HCT116 (cell line): ENCODE measurements at regions of chr2 and their contacts with region 1.

Region 1: DNA sequence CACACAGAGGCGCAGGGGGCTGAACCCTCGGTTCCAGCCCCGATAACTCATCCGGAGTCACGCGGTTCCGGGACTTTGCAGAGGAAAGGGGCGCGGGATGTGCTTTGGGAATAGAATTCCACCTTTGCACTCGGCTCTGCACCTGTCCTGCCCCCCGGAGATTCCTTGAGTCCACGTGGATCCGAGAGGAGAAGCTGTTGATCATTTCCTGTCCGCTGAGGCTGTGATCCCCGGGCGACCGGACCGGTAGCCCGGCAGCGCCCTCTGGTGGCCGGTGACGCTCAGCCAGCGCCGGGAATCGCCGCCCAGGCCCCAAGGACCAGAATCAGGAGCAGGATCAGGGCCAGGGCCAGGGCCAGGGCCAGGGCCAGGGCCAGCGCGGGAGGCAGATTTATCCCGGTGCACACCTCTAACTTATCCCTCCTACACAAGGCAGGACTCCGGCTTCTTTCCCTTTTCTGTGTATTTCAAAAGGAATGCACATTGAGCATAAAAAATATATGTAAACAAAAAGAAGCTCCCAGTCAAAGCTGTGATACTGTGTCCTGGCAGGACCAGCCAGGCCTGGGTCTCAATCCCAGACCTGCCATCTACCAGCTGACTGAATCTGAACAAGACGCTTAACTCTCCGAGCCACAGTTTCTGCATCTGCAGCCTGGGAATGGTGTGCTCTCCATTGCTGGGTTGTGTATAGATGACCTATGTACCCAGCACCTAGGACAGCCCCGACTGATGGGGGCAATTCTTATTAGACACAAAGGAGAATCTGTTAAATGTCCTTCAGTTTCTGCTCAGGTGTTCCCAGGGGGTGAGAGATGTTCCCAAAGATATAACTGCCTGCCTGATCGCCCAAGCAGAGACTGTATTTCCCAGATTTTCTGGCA is 8.5 kb upstream of the SPATA3 start:
- DNase-seq: peak; percentile 51
- ATAC-seq: peak; percentile 93
- H3K4me3 ChIP-seq: peak overlapping the region; percentile 24 to 47
- H3K27ac ChIP-seq: no peak overlapping the region
- H3K4me1 ChIP-seq: peaks cover 4 to 6% of the 10 kb centered on the region in 2 experiments; a peak in 3 of 4 replicates
- H3K27me3 ChIP-seq: no peaks in the 10 kb centered on the region
- CTCF ChIP-seq: peak; percentile 92 to 95 (median 94)
- POLR2A ChIP-seq: no peak
- RAD21 ChIP-seq: peak; percentile 94

Region 2: GRCh38 chr2:230824406-230824978 is 162.9 kb before region 1 on chr2:
- CTCF ChIA-PET with region 1: interaction called, 36 read pairs
- POLR2A ChIA-PET with region 1: no interaction called
- RAD21 ChIA-PET with region 1: interaction called, 7 to 9 read pairs
- intact Hi-C with region 1: loop called (anchors 1 kb)
- DNase-seq: peak; percentile 77
- ATAC-seq: peak; percentile 93
- H3K4me3 ChIP-seq: peak overlapping the region in 1 of 2 experiments; percentile 13; a peak in 1 of 4 replicates
- H3K27ac ChIP-seq: no peak overlapping the region
- H3K4me1 ChIP-seq: peaks cover 0 to 3% of the 10 kb centered on the region in 2 experiments; a peak in 1 of 4 replicates
- H3K27me3 ChIP-seq: no peaks in the 10 kb centered on the region
- CTCF ChIP-seq: peak; percentile 50 to 85 (median 71)
- POLR2A ChIP-seq: no peak
- RAD21 ChIP-seq: peak; percentile 93

Region 3: GRCh38 chr2:230902180-230902899 is 85.0 kb before region 1 on chr2:
- CTCF ChIA-PET with region 1: interaction called, 28 read pairs
- POLR2A ChIA-PET with region 1: no interaction called
- RAD21 ChIA-PET with region 1: interaction called in 1 of 2 experiments, 3 read pairs
- intact Hi-C with region 1: loop called (anchors 1 kb)
- DNase-seq: peak; percentile 54
- ATAC-seq: peak; percentile 73
- H3K4me3 ChIP-seq: no peak overlapping the region
- H3K27ac ChIP-seq: no peak overlapping the region
- H3K4me1 ChIP-seq: peaks cover 15 to 22% of the 10 kb centered on the region in 2 experiments
- H3K27me3 ChIP-seq: peaks cover 33% of the 10 kb centered on the region; the same call in 1 of the 2 replicates
- CTCF ChIP-seq: peak; percentile 92 to 94 (median 92)
- POLR2A ChIP-seq: no peak
- RAD21 ChIP-seq: peak; percentile 95